ENCODE measurements at regions of chr2 and their contacts with region 1.

Region 1: GRCh38 chr2:173571021-173571882 is 216.6 kb downstream of the CDCA7 start:
- DNase-seq: no peak
- ATAC-seq: peak; percentile 68

Region 2: DNA sequence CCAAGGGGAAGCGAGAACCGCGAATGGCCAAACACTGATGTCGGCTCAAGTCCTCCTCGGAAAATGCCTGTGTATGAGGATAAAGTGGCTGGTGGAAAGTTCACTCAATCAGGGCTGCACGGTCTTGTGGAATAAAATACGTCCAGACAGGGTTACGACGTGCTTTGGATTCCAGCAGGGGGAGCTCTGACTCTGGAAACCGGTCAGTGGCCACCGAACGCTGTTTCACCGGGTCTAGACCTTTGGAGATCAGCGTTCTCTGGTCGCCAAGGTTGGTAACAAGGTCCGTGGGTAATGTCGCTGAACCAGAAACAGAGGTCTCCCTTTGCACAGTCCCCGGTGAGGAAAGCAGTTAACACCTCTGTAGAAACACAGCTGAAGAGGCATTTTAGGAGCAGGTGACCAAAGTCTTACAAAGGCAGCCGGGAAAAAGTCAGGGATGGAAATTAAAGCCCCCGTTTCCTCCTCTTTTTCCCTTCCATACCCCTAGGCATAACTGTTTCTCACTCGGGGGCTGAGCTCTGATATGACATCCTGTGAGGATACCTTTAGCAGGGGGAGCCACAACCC is 168.8 kb before region 1 on chr2:
- intact Hi-C with region 1: loop called (anchors 10 kb)
- DNase-seq: peak; percentile 82
- ATAC-seq: peak; percentile 97

Region 3: DNA sequence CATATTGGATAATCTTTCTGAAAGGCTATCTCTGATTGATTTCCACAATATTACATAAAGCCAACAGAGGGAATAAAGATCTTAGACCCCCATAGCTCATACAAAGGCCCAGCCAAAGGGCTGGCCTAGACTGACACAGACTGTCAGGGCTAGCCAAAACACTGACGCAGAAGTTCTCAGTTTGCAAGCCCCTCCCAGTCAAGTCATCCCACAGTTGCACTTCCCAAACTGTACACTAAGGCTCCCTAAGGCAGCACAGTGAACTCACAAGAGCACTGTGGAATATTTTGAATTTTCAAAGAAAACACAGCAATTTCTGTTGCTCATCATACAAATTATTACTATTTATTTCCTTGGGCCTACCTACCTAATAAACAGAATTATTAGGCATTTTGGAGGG is 149.1 kb after region 1 on chr2:
- intact Hi-C with region 1: no loop called
- DNase-seq: no peak
- ATAC-seq: no peak

Region 4: DNA sequence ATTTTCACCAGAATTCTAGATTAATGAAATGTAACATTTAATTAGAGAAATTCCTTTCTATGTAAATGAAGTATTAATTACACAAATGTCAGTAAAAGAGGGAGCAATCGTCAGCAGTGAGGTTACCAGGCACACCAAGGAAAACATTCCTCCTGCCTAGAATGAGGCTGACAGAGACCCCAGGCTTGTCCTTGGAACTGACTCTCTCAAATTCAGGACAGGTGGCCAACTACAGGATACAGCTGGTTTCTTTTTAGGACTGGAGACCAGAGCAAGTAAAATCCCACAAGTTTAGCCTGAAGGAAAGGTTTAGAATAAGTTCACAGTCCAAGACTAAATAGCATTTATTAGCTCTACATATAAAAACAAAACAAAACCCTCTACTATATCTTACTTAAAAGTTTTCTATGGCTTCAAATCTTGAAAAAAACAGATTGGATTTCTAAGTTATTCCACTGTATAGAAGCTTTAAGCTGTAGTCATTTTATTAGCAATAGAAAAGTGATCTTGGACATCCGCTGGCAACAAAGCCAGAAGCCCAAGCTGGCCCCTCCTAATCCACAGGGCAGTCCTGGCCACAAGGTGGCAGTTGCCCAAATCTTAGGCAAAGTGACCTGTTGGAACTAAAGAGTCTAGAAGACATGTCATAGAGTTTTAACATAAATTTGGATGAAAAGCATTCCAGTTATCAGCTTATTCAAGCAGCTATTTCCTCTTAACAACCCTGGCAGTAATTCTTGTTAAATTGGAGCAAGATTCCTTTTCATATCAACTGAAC is 313.0 kb after region 1 on chr2:
- intact Hi-C with region 1: loop called (anchors 10 kb)
- DNase-seq: peak; percentile 75
- ATAC-seq: peak; percentile 79